GM18951 (cell line): ENCODE measurements at regions of chr7 and their contacts with region 1.

Region 1: GRCh38 chr7:127717502-127718339 is 65.7 kb downstream of the SND1 start:
- POLR2A ChIP-seq: no peak

Region 2: GRCh38 chr7:128209229-128210035 is 491.7 kb after region 1 on chr7:
- in situ Hi-C with region 1: loop called (anchors 10 kb)
- POLR2A ChIP-seq: no peak